Activated CD4-positive, alpha-beta T cell treated with anti-CD3 and anti-CD28 coated beads for 36 hours (primary cell): ENCODE measurements at regions of chr19 and their contacts with region 1.

Region 1: GRCh38 chr19:10960314-10961072 is at the start of gene SMARCA4:
- DNase-seq: peak; percentile 99
- ATAC-seq: peak; percentile 76
- H3K4me3 Mint-ChIP-seq: peak within 1 kb of the TSS; percentile 89
- H3K27ac Mint-ChIP-seq: peak within 1 kb of the TSS; percentile 90
- H3K4me1 Mint-ChIP-seq: peaks cover 38% of the 10 kb centered on the region
- H3K27me3 Mint-ChIP-seq: no peaks in the 10 kb centered on the region
- total RNA-seq, gene SMARCA4: 102 to 116 TPM

Region 2: GRCh38 chr19:10760273-10760944 is 200.1 kb before region 1 on chr19:
- CTCF ChIA-PET with region 1: no interaction called
- POLR2A ChIA-PET with region 1: no interaction called
- intact Hi-C with region 1: loop called in 1 of 2 experiments (anchors 2 kb)
- DNase-seq: peak; percentile 72
- ATAC-seq: peak; percentile 56
- H3K4me3 Mint-ChIP-seq: peak overlapping the region; percentile 70
- H3K27ac Mint-ChIP-seq: peak overlapping the region; percentile 84
- H3K4me1 Mint-ChIP-seq: peaks cover 83% of the 10 kb centered on the region
- H3K27me3 Mint-ChIP-seq: no peaks in the 10 kb centered on the region

Region 3: DNA sequence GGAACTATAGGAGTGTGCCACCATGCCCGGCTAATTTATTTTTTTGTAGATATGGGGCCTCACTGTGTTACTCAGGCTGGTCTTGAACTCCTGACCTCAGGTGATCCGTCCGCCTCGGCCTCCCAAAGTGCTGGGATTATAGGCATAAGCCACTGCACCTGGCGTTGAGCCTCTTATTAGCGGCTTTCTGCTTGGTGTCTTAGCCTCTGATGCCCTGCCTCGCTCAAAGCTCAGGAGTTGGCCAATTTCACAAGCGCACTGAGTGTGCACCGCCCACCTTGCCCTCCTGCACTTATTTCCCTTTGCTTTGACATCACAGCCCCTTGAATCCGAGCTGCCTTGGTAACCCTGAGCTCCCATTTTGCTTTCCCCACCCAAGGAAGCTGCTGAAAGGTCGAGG is 42.1 kb before region 1 on chr19:
- CTCF ChIA-PET with region 1: no interaction called
- POLR2A ChIA-PET with region 1: no interaction called
- intact Hi-C with region 1: no loop called
- DNase-seq: no peak
- ATAC-seq: no peak
- H3K4me3 Mint-ChIP-seq: no peak overlapping the region
- H3K27ac Mint-ChIP-seq: no peak overlapping the region
- H3K4me1 Mint-ChIP-seq: no peaks in the 10 kb centered on the region
- H3K27me3 Mint-ChIP-seq: no peaks in the 10 kb centered on the region

Region 4: GRCh38 chr19:10928525-10929401 is 31.7 kb before region 1 on chr19 and contains the starts of genes TIMM29 and YIPF2:
- CTCF ChIA-PET with region 1: interaction called, 4 read pairs
- POLR2A ChIA-PET with region 1: no interaction called
- intact Hi-C with region 1: loop called in 1 of 2 experiments (anchors 1 kb)
- DNase-seq: peak; percentile 97
- ATAC-seq: peak; percentile 96
- H3K4me3 Mint-ChIP-seq: peak within 1 kb of the TSS; percentile 90
- H3K27ac Mint-ChIP-seq: peak within 1 kb of the TSS; percentile 79
- H3K4me1 Mint-ChIP-seq: peaks cover 21% of the 10 kb centered on the region
- H3K27me3 Mint-ChIP-seq: no peaks in the 10 kb centered on the region
- total RNA-seq, gene TIMM29: 8.6 to 15.5 TPM
- total RNA-seq, gene YIPF2: 15.8 to 21.3 TPM

Region 5: DNA sequence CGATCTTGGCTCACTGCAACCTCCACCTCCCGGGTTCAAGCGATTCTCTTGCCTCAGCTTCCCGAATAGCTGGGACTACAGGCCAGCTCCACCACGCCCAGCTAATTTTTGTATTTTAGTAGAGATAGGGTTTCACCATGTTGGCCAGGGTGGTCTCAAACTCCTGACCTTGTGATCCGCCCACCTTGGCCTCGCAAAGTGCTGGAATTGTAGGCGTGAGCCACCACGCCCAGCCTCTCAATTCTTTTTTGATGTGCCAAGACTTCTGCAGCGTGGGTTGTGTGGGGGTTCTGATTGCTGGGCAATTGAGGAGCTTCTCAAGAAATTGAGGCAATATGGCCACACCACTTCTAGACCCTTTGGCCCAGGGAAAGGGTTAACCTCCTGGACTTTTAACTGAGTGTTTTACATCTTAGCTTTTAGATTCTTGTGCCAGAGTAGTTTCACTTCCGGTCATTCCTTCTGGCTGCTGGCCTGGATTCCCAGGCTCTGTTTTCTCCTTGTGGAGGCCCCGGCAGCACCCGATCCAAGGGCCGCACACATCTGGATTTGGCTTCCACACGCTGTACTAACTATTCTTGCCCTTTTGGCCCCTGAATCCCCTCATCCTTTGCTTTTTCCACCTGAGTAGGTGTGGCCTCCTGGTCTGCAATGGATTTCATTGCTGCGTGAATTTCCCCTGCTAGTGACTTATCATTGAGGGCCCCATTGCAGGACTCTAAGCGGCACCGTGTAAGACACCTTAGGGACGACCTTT is 15.1 kb after region 1 on chr19:
- CTCF ChIA-PET with region 1: no interaction called
- POLR2A ChIA-PET with region 1: no interaction called
- intact Hi-C with region 1: no loop called
- DNase-seq: no peak
- ATAC-seq: no peak
- H3K4me3 Mint-ChIP-seq: no peak overlapping the region
- H3K27ac Mint-ChIP-seq: no peak overlapping the region
- H3K4me1 Mint-ChIP-seq: peaks cover 45% of the 10 kb centered on the region
- H3K27me3 Mint-ChIP-seq: no peaks in the 10 kb centered on the region

Region 6: DNA sequence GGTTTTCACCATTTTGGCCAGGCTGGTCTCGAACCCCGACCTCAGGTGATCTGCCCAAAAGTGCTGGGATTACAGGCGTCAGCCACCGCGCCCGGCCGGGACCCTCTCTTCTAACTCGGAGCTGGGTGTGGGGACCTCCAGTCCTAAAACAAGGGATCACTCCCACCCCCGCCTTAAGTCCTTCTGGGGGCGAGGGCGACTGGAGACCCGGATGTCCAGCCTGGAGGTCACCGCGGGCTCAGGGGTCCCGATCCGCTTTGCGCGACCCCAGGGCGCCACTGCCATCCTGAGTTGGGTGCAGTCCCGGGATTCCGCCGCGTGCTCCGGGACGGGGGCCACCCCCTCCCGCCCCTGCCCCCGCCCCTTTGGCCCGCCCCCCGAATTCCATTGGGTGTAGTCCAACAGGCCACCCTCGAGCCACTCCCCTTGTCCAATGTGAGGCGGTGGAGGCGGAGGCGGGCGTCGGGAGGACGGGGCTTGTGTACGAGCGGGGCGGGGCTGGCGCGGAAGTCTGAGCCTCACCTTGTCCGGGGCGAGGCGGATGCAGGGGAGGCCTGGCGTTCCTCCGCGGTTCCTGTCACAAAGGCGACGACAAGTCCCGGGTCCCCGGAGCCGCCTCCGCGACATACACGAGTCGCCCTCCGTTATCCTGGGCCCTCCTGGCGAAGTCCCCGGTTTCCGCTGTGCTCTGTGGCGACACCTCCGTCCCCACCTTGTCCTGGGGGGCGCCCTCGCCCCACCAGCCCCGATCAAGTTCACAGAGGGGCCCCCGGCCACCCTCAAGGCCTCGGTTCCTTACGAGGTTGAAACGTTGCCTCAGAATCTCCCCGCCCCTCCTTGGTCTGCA is 129.8 kb after region 1 on chr19:
- CTCF ChIA-PET with region 1: no interaction called
- POLR2A ChIA-PET with region 1: interaction called, 9 read pairs
- intact Hi-C with region 1: loop called (anchors 1 to 5 kb)
- DNase-seq: peak; percentile 99
- ATAC-seq: peak; percentile 88
- H3K4me3 Mint-ChIP-seq: peak overlapping the region; percentile 93
- H3K27ac Mint-ChIP-seq: peak overlapping the region; percentile 97
- H3K4me1 Mint-ChIP-seq: peaks cover 51% of the 10 kb centered on the region
- H3K27me3 Mint-ChIP-seq: no peaks in the 10 kb centered on the region

Region 7: GRCh38 chr19:11435058-11435832 is 474.8 kb after region 1 on chr19 and contains the starts of genes ODAD3 and PRKCSH:
- CTCF ChIA-PET with region 1: interaction called, 4 read pairs
- POLR2A ChIA-PET with region 1: no interaction called
- intact Hi-C with region 1: loop called in 1 of 2 experiments (anchors 1 kb)
- DNase-seq: peak; percentile 99
- ATAC-seq: peak; percentile 96
- H3K4me3 Mint-ChIP-seq: peak within 1 kb of the TSS; percentile 98
- H3K27ac Mint-ChIP-seq: peak within 1 kb of the TSS; percentile 99
- H3K4me1 Mint-ChIP-seq: peaks cover 14% of the 10 kb centered on the region
- H3K27me3 Mint-ChIP-seq: no peaks in the 10 kb centered on the region
- total RNA-seq, gene ODAD3: 0.16 to 0.25 TPM
- total RNA-seq, gene PRKCSH: 225 to 269 TPM

Region 8: DNA sequence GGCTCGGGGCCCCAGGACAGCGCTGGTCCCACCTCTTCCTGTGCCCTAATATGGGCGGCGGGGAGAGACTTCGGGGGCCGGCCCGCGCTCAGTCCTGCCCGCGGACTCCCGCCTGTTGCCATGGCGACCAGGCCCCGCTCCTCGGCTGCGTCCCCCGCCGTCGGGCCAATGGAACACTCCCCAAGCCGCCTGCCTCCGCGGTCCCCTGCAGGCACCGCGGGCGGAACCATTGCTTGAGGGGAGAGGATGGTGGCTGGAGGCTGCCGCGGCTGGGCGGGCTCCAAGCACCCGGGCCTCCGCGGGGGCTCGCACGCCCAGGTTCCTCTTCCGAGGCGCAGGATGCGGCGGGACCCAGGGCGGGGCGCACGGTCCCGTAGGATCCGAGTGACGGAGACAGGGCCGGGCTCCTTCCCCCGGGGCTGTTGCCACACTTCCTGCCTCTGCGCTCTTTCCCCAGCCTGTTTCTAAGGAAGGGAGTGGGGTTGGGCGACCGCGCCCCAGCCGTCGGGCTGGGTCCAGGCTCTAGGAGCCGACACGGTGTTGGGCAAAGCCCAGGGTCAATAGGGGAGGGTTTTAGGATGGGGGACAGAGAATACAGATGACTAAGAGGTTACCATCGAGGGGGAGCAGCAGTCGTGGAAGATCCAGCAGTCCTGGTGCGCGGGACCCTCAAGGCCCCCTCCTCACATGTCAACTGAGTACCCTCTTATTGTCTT is 1829.6 kb after region 1 on chr19:
- CTCF ChIA-PET with region 1: no interaction called
- POLR2A ChIA-PET with region 1: no interaction called
- intact Hi-C with region 1: loop called in 1 of 2 experiments (anchors 5 kb)
- DNase-seq: peak; percentile 99
- ATAC-seq: peak; percentile 48
- H3K4me3 Mint-ChIP-seq: peak overlapping the region; percentile 92
- H3K27ac Mint-ChIP-seq: peak overlapping the region; percentile 98
- H3K4me1 Mint-ChIP-seq: peaks cover 28% of the 10 kb centered on the region
- H3K27me3 Mint-ChIP-seq: no peaks in the 10 kb centered on the region